ENCODE measurements at regions of chr11 and their contacts with region 1.

Region 1: GRCh38 chr11:46845740-46846509 is at the start of gene CKAP5:
- DNase-seq: peak; percentile 87
- H3K4me3 Mint-ChIP-seq: peak within 1 kb of the TSS; percentile 98
- H3K27ac Mint-ChIP-seq: peak within 1 kb of the TSS; percentile 98
- H3K4me1 Mint-ChIP-seq: peaks cover 41% of the 10 kb centered on the region
- H3K27me3 Mint-ChIP-seq: peaks cover 4% of the 10 kb centered on the region
- total RNA-seq, gene CKAP5: 121 TPM in 2 replicates

Region 2: GRCh38 chr11:46826310-46827044 is 19.4 kb before region 1 on chr11:
- intact Hi-C with region 1: loop called (anchors 1 kb)
- DNase-seq: peak; percentile 62
- H3K4me3 Mint-ChIP-seq: peak overlapping the region; percentile 69
- H3K27ac Mint-ChIP-seq: no peak overlapping the region
- H3K4me1 Mint-ChIP-seq: peaks cover 33% of the 10 kb centered on the region
- H3K27me3 Mint-ChIP-seq: no peaks in the 10 kb centered on the region